ENCODE measurements at regions of chr12 and their contacts with region 1.

Region 1: DNA sequence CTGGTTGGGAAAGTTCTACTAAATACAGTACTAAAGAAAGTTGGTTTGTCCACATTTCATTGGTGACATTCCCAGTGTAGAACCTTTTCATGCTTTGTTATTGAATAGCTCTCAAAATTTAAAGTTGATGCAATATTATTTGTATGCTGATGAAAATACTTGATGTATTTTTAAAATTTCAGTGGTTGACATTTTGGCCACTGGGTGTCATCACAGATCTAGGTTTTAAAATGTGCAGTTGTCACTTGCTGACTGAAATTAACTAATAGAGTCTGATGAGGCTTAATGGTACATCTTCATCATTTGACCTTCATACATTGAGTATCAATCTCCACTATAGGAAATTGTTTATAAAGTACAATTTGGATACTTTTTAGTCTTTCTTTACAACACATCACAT is 37.1 kb downstream of the CMAS start:
- DNase-seq: peak; percentile 33
- ATAC-seq: peak; percentile 20
- H3K4me3 Mint-ChIP-seq: no peak overlapping the region
- H3K27ac Mint-ChIP-seq: no peak overlapping the region
- H3K4me1 Mint-ChIP-seq: no peaks in the 10 kb centered on the region
- H3K27me3 Mint-ChIP-seq: no peaks in the 10 kb centered on the region
- CTCF ChIP-seq: peak; percentile 50

Region 2: DNA sequence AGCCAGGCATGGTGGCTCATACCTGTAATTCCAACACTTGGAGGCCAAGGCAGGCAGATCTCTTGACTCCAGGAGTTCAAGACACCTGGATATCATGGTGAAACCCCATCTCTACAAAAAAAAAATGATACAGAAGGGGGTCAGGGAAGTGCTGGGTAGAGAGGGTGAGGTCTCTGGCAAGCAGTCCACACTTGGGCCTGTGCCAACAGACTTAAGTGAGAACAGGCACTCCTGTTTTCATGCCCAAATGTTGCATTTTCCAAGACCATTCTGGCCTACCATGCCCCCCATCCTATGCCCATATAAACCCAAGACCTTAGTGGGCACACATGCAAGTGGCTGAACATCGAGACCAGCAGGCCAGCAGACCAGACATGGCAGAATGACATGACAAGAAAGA is 53.2 kb before region 1 on chr12:
- CTCF ChIA-PET with region 1: no interaction called
- POLR2A ChIA-PET with region 1: no interaction called
- intact Hi-C with region 1: no loop called
- DNase-seq: no peak
- ATAC-seq: no peak
- H3K4me3 Mint-ChIP-seq: no peak overlapping the region
- H3K27ac Mint-ChIP-seq: no peak overlapping the region
- H3K4me1 Mint-ChIP-seq: peaks cover 4% of the 10 kb centered on the region
- H3K27me3 Mint-ChIP-seq: no peaks in the 10 kb centered on the region
- CTCF ChIP-seq: no peak

Region 3: GRCh38 chr12:22334410-22335290 is 251.5 kb after region 1 on chr12 and contains the start of gene ST8SIA1:
- CTCF ChIA-PET with region 1: interaction called, 4 read pairs
- POLR2A ChIA-PET with region 1: no interaction called
- intact Hi-C with region 1: loop called (anchors 5 kb)
- DNase-seq: peak; percentile 60
- ATAC-seq: peak; percentile 45
- H3K4me3 Mint-ChIP-seq: peak within 1 kb of the TSS; percentile 84
- H3K27ac Mint-ChIP-seq: peak within 1 kb of the TSS; percentile 80
- H3K4me1 Mint-ChIP-seq: peaks cover 16% of the 10 kb centered on the region
- H3K27me3 Mint-ChIP-seq: peaks cover 38% of the 10 kb centered on the region
- CTCF ChIP-seq: no peak
- total RNA-seq, gene ST8SIA1: 1.5 to 2.5 TPM

Region 4: GRCh38 chr12:22443379-22444316 is 360.5 kb after region 1 on chr12:
- CTCF ChIA-PET with region 1: interaction called, 5 read pairs
- POLR2A ChIA-PET with region 1: no interaction called
- intact Hi-C with region 1: loop called (anchors 5 kb)
- DNase-seq: peak; percentile 68
- ATAC-seq: peak; percentile 99
- H3K4me3 Mint-ChIP-seq: no peak overlapping the region
- H3K27ac Mint-ChIP-seq: no peak overlapping the region
- H3K4me1 Mint-ChIP-seq: no peaks in the 10 kb centered on the region
- H3K27me3 Mint-ChIP-seq: no peaks in the 10 kb centered on the region
- CTCF ChIP-seq: peak; percentile 77

Region 5: GRCh38 chr12:22459838-22460490 is 376.8 kb after region 1 on chr12:
- CTCF ChIA-PET with region 1: interaction called, 13 read pairs
- POLR2A ChIA-PET with region 1: no interaction called
- intact Hi-C with region 1: loop called (anchors 5 kb)
- DNase-seq: no peak
- ATAC-seq: peak; percentile 62
- H3K4me3 Mint-ChIP-seq: no peak overlapping the region
- H3K27ac Mint-ChIP-seq: no peak overlapping the region
- H3K4me1 Mint-ChIP-seq: peaks cover 4% of the 10 kb centered on the region
- H3K27me3 Mint-ChIP-seq: no peaks in the 10 kb centered on the region
- CTCF ChIP-seq: peak; percentile 66